Heart right ventricle (tissue), 16 donors: ENCODE measurements at regions of chr11 and their contacts with region 1.

Region 1: DNA sequence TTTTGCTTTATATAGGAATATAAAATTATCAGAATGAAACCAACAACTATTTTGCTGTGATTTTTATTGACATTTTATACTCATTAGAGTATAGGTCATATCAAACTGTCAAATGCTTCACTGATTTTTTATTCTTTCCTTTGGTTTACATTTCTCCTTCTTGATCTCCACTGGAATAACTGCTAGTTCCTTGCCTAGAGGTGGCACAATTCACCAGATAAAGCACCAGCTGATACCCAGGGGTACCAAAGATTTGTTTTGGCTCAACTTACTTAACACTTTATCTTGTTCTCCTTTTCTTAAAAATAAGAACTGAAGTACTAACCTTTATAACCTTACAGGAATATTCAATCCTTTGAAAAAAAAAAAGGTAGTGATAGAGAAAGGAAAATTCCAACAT is 725.1 kb upstream of the CHORDC1 start:
- DNase-seq: no peak
- ATAC-seq: no peak
- H3K4me3 ChIP-seq: no peak overlapping the region
- H3K27ac ChIP-seq: no peak overlapping the region
- H3K4me1 ChIP-seq: no peaks in the 10 kb centered on the region
- H3K27me3 ChIP-seq: no peaks in the 10 kb centered on the region
- CTCF ChIP-seq: peak in 5 of 9 donors; percentile 10 to 35 (median 25)

Region 2: DNA sequence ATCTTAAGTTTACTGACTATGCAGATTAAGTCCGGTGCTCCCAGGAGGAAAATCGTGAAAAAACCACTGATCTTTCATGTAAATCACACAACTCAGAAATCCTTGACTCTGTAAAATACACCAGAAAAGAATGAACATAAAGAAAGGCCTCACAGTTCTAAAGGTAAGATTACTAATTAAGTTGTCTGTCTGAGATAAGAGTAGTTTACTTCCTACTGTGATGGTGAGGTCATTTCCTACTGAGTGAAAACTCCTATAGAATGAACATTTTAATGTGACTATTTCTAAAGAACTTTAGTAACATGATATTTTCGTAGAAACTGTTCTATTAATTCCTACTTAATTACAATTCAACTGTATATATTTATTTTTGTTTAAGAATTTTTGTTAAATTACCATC is 49.3 kb after region 1 on chr11:
- intact Hi-C with region 1: no loop called
- DNase-seq: no peak
- ATAC-seq: no peak
- H3K4me3 ChIP-seq: no peak overlapping the region
- H3K27ac ChIP-seq: no peak overlapping the region
- H3K4me1 ChIP-seq: no peaks in the 10 kb centered on the region
- H3K27me3 ChIP-seq: no peaks in the 10 kb centered on the region
- CTCF ChIP-seq: no peak

Region 3: DNA sequence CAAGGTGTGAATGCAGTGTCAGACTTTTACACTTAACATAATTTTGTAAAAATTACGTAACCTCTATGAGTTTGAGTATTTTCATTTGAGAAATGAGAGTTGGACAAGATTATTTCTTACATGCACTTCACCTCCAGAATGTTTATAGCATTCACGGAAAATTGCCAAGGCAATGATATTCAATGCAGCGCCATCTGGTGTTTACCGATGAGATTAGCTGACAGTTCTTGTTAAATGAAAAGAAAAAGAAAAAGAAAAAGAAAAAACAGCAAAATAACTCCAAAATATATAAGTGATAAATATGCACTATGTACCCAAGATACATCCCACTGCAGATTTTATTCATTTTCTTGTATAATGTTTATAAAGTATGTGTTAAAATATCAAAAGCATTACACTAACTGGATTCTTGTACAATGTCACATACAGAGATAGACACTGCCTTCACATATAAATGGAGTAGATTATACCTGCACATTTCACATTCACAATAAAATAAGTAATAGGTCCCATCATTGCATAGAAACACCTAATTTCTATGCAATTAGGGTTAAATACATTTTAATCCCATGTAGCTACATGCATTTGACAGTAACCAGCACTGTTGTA is 300.4 kb after region 1 on chr11:
- intact Hi-C with region 1: loop called in 2 of 10 experiments (anchors 5 to 10 kb)
- DNase-seq: peak in 1 of 2 donors; percentile 9
- ATAC-seq: no peak
- H3K4me3 ChIP-seq: no peak overlapping the region
- H3K27ac ChIP-seq: no peak overlapping the region
- H3K4me1 ChIP-seq: no peaks in the 10 kb centered on the region
- H3K27me3 ChIP-seq: no peaks in the 10 kb centered on the region
- CTCF ChIP-seq: peak; percentile 17 to 78 (median 67)

Region 4: DNA sequence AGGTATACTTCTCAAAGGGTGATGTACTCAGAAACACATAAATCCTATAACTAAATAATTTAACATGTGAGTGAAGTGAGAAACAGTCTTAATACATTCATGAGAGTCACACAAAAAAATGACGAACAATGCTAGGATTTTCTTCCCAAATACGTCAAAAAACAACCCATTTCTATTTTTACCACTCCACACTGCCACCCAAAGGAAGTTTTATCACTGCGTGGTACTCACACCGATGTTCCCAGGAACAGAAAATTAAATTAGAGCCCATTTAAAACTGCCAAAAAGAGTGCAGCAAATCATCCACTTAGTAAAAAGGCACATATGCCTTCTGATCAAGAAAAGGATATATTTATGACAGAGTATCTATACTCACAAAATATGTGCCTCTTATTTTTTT is 565.8 kb after region 1 on chr11:
- intact Hi-C with region 1: loop called in 1 of 10 experiments (anchors 5 kb)
- DNase-seq: no peak
- ATAC-seq: no peak
- H3K4me3 ChIP-seq: no peak overlapping the region
- H3K27ac ChIP-seq: no peak overlapping the region
- H3K4me1 ChIP-seq: no peaks in the 10 kb centered on the region
- H3K27me3 ChIP-seq: no peaks in the 10 kb centered on the region
- CTCF ChIP-seq: peak in 1 of 9 donors; percentile 15